ENCODE measurements at regions of chr21 and their contacts with region 1.

Region 1: DNA sequence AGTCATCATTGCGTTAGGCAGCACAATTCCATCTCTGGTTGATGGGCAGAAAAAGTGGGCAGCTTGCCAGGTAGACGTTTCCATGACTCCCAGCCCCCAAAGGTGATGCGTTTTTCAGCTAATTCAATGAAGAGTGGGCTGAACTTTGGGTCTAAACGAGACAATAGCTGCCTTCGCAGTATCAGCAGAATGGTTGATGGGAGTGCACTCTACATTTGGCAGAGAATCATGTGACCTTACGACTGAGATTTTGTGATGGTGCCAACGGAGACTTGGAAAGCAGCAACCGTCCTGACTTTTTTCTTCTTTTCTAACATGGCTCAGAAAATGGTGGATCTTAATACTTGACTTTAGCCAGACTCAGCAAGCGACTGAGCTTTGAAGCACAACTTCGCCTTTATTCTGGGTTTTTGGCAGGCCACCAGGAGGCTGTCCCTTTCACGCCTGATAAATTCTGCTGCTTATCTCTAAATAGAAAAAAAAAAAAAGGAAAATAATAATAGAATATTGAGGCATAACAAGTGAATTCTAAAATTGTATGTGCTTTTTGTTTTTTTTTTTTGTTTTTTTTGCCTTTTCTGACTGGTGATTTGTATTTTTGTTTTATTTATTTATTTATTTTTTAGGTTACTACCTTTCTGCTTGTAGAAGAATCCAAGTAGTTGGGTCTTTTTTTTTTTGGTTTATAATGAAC is 804.8 kb downstream of the USP25 start:
- DNase-seq: peak; percentile 75 to 85
- ATAC-seq: peak; percentile 67 to 79 (median 75)
- H3K4me3 ChIP-seq: peak overlapping the region; percentile 74
- H3K27ac ChIP-seq: peak overlapping the region; percentile 87
- H3K4me1 ChIP-seq: peaks cover 19% of the 10 kb centered on the region
- H3K27me3 ChIP-seq: no peaks in the 10 kb centered on the region
- CTCF ChIP-seq: no peak

Region 2: DNA sequence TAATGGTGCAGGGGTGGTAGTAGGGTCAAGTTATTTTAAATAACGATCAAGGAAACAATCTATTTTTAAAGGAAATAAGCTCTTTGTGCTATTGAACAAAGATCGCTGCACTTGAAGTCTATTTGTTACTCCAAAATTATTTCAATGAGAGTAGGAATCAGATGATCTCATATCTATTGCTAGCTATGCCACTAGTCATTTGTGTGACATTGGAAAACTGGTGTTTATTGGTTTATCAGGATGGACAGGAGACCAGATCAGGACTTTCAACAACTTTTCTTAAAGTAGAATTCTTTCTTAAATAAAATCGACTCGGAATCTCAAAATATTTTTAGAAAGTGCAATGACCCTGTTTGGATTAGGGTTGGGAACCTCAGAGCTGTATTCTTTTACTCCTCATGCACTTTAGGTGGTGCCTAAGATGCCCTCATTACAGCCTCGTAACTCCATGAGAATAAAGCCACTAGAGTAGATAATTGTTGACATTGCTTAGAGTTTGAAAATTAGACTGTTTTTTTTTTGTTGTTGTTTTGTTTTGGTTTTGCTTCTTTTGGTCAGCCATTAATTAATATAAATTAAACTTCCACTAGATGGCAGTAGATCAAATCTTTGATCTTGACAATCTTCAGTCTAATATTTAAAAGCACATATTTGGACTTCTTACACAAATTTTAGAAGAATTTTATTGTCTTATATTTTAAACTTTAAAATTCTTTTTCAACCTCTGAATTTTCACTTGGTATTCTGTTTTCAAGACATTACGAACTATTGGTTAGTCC is 452.3 kb before region 1 on chr21:
- intact Hi-C with region 1: loop called in 1 of 2 experiments (anchors 10 kb)
- DNase-seq: no peak
- ATAC-seq: no peak
- H3K4me3 ChIP-seq: no peak overlapping the region
- H3K27ac ChIP-seq: no peak overlapping the region
- H3K4me1 ChIP-seq: peaks cover 8% of the 10 kb centered on the region
- H3K27me3 ChIP-seq: no peaks in the 10 kb centered on the region
- CTCF ChIP-seq: peak; percentile 54

Region 3: GRCh38 chr21:16407403-16408240 is 126.9 kb before region 1 on chr21:
- intact Hi-C with region 1: no loop called
- DNase-seq: no peak
- ATAC-seq: no peak
- H3K4me3 ChIP-seq: no peak overlapping the region
- H3K27ac ChIP-seq: no peak overlapping the region
- H3K4me1 ChIP-seq: no peaks in the 10 kb centered on the region
- H3K27me3 ChIP-seq: no peaks in the 10 kb centered on the region
- CTCF ChIP-seq: no peak

Region 4: DNA sequence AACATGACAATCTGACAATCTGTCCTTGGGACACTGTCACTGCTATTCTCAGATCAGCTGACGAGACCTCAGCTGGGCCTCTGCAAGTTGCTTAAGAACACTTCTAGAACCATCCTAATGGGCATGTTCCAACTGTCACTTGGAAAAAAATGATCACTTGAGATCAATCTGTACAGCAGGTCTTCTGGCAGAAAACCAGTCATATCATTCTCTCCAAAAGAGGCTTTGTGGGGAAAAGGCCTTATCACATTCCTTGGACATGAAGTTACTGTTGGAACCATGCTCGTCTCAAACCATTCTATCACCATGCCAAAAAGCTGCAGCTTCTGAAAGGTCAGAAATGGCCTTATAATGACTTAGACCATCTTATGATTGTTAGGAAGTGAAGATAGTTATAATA is 60.6 kb before region 1 on chr21:
- intact Hi-C with region 1: loop called (anchors 10 kb)
- DNase-seq: no peak
- ATAC-seq: peak; percentile 46 to 86 (median 78)
- H3K4me3 ChIP-seq: no peak overlapping the region
- H3K27ac ChIP-seq: peak overlapping the region; percentile 59
- H3K4me1 ChIP-seq: peaks cover 29% of the 10 kb centered on the region
- H3K27me3 ChIP-seq: no peaks in the 10 kb centered on the region
- CTCF ChIP-seq: no peak

Region 5: GRCh38 chr21:16573578-16573977 is 39.0 kb after region 1 on chr21:
- intact Hi-C with region 1: loop called in 1 of 2 experiments (anchors 5 kb)
- DNase-seq: no peak
- ATAC-seq: no peak
- H3K4me3 ChIP-seq: no peak overlapping the region
- H3K27ac ChIP-seq: no peak overlapping the region
- H3K4me1 ChIP-seq: peaks cover 21% of the 10 kb centered on the region
- H3K27me3 ChIP-seq: no peaks in the 10 kb centered on the region
- CTCF ChIP-seq: no peak

Region 6: DNA sequence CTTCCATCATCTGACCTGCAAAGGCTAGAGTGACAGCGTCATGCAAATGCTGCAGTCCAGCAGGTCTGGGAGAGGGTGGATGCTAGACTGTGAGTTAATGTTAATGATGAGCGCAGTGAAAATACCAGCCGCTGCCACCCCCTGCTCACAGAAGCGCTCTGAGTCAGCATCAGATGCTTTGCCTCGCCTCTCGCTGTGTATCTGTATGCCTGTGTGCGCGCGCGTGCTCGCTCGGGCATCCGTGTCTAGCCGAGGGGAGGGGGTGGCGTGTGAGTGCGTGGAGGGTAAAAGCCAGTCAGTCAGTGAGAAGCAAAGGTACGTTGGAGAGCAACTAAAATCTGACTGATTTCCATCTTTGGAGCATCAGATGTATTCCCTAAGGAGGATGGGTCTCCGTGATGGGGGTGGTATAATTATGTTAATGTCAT is 53.9 kb after region 1 on chr21:
- intact Hi-C with region 1: loop called in 1 of 2 experiments (anchors 5 kb)
- DNase-seq: peak; percentile 63 to 65
- ATAC-seq: peak; percentile 61 to 70 (median 66)
- H3K4me3 ChIP-seq: peak overlapping the region; percentile 64
- H3K27ac ChIP-seq: peak overlapping the region; percentile 87
- H3K4me1 ChIP-seq: peaks cover 19% of the 10 kb centered on the region
- H3K27me3 ChIP-seq: no peaks in the 10 kb centered on the region
- CTCF ChIP-seq: no peak

Measured in psoas muscle (tissue), 8 donors.